ENCODE measurements at regions of chr7 and their contacts with region 1.

Region 1: GRCh38 chr7:92691578-92691977 is 101.4 kb upstream of the FAM133B start:
- ATAC-seq: peak in 5 of 8 experiments; percentile 23 to 44 (median 32)
- H3K4me3 ChIP-seq: no peak overlapping the region
- H3K27ac ChIP-seq: no peak overlapping the region
- H3K4me1 ChIP-seq: peaks cover under 1 to 9% of the 10 kb centered on the region in 2 donors

Region 2: DNA sequence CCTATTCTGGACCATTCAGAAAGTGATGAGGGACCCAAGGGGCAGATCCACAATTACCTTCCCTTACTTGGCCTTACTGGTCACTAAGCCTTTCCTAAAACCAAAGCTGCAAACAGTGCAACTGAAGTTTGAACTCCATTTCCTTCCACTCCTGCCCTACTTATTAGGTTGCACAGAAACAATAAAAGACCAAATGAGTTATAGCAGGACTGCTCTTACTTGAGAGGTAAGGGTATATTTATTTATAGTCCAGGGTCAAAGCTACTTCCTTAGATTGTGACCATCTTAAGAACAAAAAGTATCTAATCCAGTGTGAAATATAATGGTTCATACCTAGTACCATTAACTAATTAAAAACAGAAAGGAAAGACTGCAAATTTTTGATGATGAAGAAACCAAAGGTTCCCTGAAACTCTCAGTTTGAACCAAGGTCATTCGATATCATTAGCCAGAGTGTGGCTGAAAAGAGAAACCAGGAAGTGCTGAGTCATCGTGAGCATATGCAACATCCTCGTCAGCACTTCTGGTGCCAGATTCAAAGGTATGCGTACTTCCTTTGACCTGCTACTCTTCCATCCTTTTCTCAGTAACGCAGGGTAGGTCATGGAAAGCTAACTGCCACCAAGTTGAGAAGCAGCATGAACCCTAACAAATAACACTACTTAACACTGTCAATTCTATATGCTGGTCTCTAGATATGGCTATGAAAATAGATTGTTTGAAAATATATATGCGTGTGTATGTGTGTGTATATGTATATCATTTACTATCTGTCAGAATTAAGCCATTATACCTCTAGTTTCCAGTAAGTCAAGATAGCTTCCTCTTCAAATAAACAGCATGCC is 118.0 kb after region 1 on chr7:
- in situ Hi-C with region 1: loop called in 1 of 9 experiments (anchors 10 kb)
- ATAC-seq: peak; percentile 69 to 93 (median 77)
- H3K4me3 ChIP-seq: no peak overlapping the region
- H3K27ac ChIP-seq: no peak overlapping the region
- H3K4me1 ChIP-seq: peaks cover 6 to 7% of the 10 kb centered on the region in 2 donors